Adrenal gland (tissue), 19 donors: ENCODE measurements at regions of chr12 and their contacts with region 1.

Region 1: DNA sequence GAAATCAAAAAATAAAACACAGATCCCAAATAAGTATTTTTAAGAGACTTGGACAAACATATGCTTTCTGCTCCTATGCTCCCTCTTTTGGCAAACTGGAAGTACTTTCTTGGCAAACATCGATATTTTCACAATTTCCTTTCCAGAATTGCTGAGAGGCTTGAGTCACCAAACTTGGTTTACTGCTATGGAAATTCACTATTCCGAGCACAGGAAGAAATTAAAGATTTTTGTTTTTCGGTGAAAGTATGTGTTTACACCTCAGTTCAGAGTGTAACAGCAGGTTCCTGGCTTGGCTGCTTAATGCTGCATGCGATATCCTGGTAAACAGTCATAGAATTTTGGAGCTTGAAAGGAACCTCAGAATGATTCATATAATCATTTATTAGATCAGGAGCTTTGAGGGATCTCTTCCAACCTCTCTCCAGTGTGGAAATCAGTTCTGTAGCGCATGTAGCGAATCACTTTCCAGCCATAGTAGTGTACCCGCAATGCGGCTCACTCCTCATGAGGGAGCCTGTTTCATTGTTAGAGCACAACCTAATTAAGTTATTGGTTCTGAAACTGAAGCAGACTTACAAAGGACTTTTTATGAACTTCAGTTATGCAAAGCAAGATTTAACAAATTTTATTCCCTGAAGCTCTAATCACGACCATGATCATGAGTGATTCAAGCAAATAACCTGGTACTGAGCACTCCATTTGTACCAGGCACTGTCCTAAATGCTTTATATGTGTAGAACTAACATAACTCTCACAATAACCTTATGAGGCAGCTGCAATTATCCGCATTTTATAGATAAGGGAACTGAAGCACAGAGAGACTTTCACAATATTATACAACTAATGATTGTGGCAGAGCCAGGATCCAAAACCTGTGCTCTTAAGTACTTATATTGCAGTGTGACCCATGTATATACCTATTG is 56.4 kb upstream of the ATP2A2 start:
- DNase-seq: peak; percentile 32 to 66 (median 48)
- H3K4me3 ChIP-seq: peak overlapping the region in 1 of 4 donors; percentile 41
- H3K27ac ChIP-seq: peak overlapping the region; percentile 65 to 85 (median 82)
- H3K4me1 ChIP-seq: peaks cover 21 to 36% of the 10 kb centered on the region in 2 donors
- H3K27me3 ChIP-seq: no peaks in the 10 kb centered on the region
- CTCF ChIP-seq: peak; percentile 46 to 81 (median 78)
- POLR2A ChIP-seq: peak in 1 of 2 donors; percentile 42

Region 2: GRCh38 chr12:109775172-109775881 is 449.3 kb before region 1 on chr12:
- intact Hi-C with region 1: no loop called
- DNase-seq: peak; percentile 74 to 89 (median 81)
- H3K4me3 ChIP-seq: no peak overlapping the region
- H3K27ac ChIP-seq: no peak overlapping the region
- H3K4me1 ChIP-seq: peaks cover 0 to 20% of the 10 kb centered on the region in 2 donors
- H3K27me3 ChIP-seq: no peaks in the 10 kb centered on the region
- CTCF ChIP-seq: peak; percentile 73 to 91 (median 88)
- POLR2A ChIP-seq: no peak

Region 3: DNA sequence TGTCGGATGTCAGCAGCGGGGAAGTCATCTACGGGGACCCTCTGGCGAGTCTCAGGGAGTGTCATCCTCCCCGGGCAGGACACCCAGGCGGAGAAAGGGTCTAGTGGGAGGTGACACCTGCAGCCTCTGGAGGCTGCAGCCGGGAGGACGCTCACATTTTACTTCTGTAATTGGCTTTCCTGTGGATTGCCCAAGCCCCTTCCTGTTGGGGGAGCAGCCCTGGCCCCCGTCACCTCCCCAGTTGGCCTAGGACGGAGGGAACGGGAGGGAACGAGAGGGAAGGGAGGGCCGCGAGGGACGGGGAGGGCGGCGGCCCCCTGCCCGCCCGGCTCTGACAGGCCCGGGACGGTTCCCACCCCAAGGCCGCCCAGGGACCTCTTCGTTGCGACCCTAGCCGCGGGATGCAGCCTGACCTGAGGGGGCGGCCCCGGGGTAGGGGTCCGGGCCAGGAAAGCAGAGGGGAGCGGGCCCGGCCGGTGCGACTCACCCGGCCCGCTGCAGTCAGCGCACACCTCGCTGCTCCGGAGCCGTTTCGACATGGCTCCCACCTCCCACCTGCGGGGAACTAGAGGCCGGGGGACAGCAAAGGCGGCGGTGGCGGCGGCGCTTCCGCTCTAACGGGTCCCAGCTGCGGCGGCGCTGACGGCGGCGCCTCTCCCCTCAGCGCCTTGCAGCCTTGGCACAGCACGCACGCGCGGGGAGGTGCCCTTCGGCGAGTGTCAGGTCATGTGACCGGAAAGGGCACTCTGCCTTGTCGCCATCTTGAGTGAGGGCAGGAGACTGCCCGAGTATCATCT is 228.8 kb before region 1 on chr12 and contains the start of gene GIT2:
- intact Hi-C with region 1: no loop called
- DNase-seq: peak; percentile 93 to 97 (median 95)
- H3K4me3 ChIP-seq: peak within 1 kb of the TSS; percentile 48 to 92 (median 75)
- H3K27ac ChIP-seq: peak within 1 kb of the TSS; percentile 58 to 96 (median 93)
- H3K4me1 ChIP-seq: peaks cover 16 to 45% of the 10 kb centered on the region in 2 donors
- H3K27me3 ChIP-seq: no peaks in the 10 kb centered on the region
- CTCF ChIP-seq: peak in 1 of 6 experiments; percentile 6
- POLR2A ChIP-seq: peak; percentile 80 to 94
- total RNA-seq, gene GIT2: 35.9 to 80.9 (median 57.9) TPM

Region 4: DNA sequence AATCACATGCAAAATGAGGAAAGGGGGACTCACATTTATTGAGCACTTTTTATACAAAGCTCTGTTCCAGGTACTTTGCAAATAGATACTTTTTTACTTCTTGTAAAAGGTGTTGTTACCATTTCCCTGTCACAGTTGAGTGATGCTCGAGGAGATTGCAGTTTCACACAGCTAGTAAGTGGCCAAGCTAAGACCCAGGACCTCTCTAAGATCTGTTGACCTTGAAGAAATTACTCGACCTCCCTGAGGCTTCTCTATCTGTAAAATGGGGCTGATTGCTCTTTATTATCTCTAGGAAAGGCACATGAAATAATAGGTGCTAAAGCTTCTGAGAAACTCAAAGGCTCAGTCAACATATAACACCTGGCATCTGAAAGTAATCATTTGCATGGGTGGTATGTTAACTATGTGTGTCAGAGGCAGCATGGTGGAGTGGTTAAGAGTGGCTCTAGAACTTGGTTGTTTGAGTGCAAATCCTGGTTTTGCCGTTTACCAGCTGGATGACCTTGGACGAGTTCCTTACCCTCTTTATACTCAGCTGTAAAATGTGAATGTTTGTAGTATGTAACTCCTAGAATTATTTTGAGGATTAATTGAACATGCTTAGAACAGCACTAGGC is 59.0 kb before region 1 on chr12:
- intact Hi-C with region 1: no loop called
- DNase-seq: no peak
- H3K4me3 ChIP-seq: no peak overlapping the region
- H3K27ac ChIP-seq: no peak overlapping the region
- H3K4me1 ChIP-seq: peaks cover 5 to 6% of the 10 kb centered on the region in 2 donors
- H3K27me3 ChIP-seq: no peaks in the 10 kb centered on the region
- CTCF ChIP-seq: no peak
- POLR2A ChIP-seq: no peak

Region 5: DNA sequence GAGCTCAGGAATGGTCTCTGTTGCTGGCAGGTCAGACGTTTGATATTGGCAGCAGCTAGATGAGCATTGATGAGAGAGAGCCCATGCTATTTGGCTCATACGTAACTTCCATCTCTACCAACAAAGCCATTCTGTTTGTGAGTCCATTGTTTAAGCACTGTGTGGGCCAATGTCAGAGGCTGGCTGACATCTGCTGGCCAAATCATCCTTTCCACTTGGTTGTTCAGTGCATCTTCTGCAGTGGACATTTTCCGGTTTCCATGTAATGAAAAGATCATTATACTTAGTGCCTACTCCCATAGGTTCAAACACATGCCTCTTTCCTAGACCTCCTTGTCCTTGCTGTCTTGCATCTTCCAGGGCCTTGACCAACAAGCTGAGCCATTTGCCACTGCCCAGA is 41.3 kb before region 1 on chr12:
- intact Hi-C with region 1: no loop called
- DNase-seq: no peak
- H3K4me3 ChIP-seq: no peak overlapping the region
- H3K27ac ChIP-seq: no peak overlapping the region
- H3K4me1 ChIP-seq: peaks cover 0 to 6% of the 10 kb centered on the region in 2 donors
- H3K27me3 ChIP-seq: no peaks in the 10 kb centered on the region
- CTCF ChIP-seq: no peak
- POLR2A ChIP-seq: no peak

Region 6: GRCh38 chr12:110279566-110279965 is 54.9 kb after region 1 on chr12:
- intact Hi-C with region 1: loop called in 1 of 2 experiments (anchors 5 kb)
- DNase-seq: peak in 1 of 7 donors; percentile 46
- H3K4me3 ChIP-seq: no peak overlapping the region
- H3K27ac ChIP-seq: peak overlapping the region in 1 of 5 donors; percentile 95
- H3K4me1 ChIP-seq: peaks cover 16 to 40% of the 10 kb centered on the region in 2 donors
- H3K27me3 ChIP-seq: no peaks in the 10 kb centered on the region
- CTCF ChIP-seq: no peak
- POLR2A ChIP-seq: no peak